ENCODE measurements at regions of chr7 and their contacts with region 1.

Region 1: GRCh38 chr7:134514663-134515062 is 12.7 kb upstream of the AKR1B10 start:
- DNase-seq: peak in 1 of 6 donors; percentile 33
- ATAC-seq: peak; percentile 69 to 87 (median 84)
- H3K4me3 ChIP-seq: no peak overlapping the region
- H3K27ac ChIP-seq: no peak overlapping the region
- H3K4me1 ChIP-seq: peaks cover 0 to under 1% (median 0%) of the 10 kb centered on the region in 3 donors
- H3K27me3 ChIP-seq: no peaks in the 10 kb centered on the region
- CTCF ChIP-seq: peak; percentile 61 to 82 (median 72)

Region 2: DNA sequence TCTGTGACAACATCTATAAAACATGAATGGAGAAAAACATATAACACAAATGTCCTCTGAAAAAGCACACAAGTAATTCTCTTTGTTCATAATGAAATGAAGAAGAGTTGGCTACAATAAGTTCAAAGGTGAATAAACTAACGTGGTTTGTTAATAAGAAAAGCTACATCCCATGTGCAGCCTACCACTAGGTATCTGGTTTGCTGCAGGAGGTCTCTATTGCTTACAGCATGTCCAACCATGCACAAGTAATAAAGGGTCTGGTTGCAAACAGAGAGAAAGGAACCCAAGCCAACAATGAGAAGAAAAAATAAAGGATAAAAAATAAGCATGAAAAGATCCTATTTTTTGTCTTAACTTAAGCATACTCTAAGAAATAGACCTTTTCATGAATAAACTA is 1572.0 kb before region 1 on chr7:
- intact Hi-C with region 1: no loop called
- DNase-seq: no peak
- ATAC-seq: no peak
- H3K4me3 ChIP-seq: no peak overlapping the region
- H3K27ac ChIP-seq: no peak overlapping the region
- H3K4me1 ChIP-seq: no peaks in the 10 kb centered on the region
- H3K27me3 ChIP-seq: no peaks in the 10 kb centered on the region
- CTCF ChIP-seq: no peak

Region 3: GRCh38 chr7:134432296-134433152 is 82.1 kb before region 1 on chr7:
- intact Hi-C with region 1: loop called in 2 of 3 experiments (anchors 5 to 10 kb)
- DNase-seq: peak; percentile 64 to 83 (median 78)
- ATAC-seq: peak; percentile 97 to 99 (median 98)
- H3K4me3 ChIP-seq: peak overlapping the region in 2 of 4 donors; percentile 19 to 37
- H3K27ac ChIP-seq: peak overlapping the region in 2 of 4 donors; percentile 66 to 80
- H3K4me1 ChIP-seq: no peaks in the 10 kb centered on the region
- H3K27me3 ChIP-seq: no peaks in the 10 kb centered on the region
- CTCF ChIP-seq: peak; percentile 12 to 66 (median 53)

Region 4: DNA sequence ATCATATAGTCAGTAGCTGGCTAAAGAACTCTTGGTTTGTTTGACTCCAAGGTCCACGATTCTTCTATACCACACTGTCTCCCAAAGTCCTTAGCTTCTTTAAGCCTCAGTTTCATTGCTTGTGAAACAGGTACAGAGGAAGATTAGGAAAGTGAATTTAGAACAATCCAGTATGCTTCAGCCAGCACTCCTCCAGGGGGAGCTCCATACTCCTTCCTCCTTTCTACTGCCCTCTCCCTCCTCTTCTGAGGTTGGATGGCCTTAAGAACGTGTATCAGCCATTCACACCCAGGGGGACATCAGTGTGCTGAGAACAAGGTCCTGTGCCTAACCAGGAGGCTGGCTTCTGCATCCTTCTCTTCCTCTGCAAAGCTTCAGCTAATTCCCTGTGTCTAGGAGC is 209.9 kb after region 1 on chr7:
- intact Hi-C with region 1: no loop called
- DNase-seq: no peak
- ATAC-seq: peak in 2 of 4 donors; percentile 39 to 55
- H3K4me3 ChIP-seq: no peak overlapping the region
- H3K27ac ChIP-seq: no peak overlapping the region
- H3K4me1 ChIP-seq: no peaks in the 10 kb centered on the region
- H3K27me3 ChIP-seq: no peaks in the 10 kb centered on the region
- CTCF ChIP-seq: no peak

Measured in pancreas (tissue), 10 donors.